ENCODE measurements at regions of chr1 and their contacts with region 1.

Region 1: GRCh38 chr1:235783148-235783776 is 83.4 kb downstream of the LYST start:
- DNase-seq: no peak
- H3K4me3 ChIP-seq: no peak overlapping the region
- H3K27ac ChIP-seq: no peak overlapping the region
- H3K4me1 ChIP-seq: no peaks in the 10 kb centered on the region
- H3K27me3 ChIP-seq: no peaks in the 10 kb centered on the region
- CTCF ChIP-seq: peak in 1 of 3 experiments; percentile 12; a peak in 1 of 4 replicates
- EP300 ChIP-seq: no peak
- POLR2A ChIP-seq: no peak
- RAD21 ChIP-seq: peak in 1 of 2 experiments; percentile 65; a peak in 3 of 4 replicates

Region 2: DNA sequence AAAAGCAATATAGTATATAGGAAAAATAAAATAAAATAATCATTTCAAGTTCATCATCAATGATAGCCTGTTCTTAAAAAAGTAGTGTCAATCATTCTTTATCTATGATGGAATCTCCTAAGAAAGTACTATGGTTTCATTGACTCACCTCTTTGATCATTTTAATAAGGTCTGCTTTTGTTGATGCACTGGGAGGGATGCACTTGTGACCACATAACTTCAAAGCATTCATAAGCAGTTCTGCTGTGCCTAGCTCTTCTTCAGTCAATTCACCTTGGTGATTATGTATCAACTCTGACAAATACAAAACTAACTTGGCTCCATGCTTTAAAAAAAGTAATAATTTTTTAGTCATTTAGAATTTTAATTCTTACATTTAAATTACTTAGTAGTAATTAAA is 48.9 kb before region 1 on chr1:
- CTCF ChIA-PET with region 1: interaction called, 17 read pairs
- POLR2A ChIA-PET with region 1: no interaction called
- DNase-seq: no peak
- H3K4me3 ChIP-seq: no peak overlapping the region
- H3K27ac ChIP-seq: no peak overlapping the region
- H3K4me1 ChIP-seq: no peaks in the 10 kb centered on the region
- H3K27me3 ChIP-seq: no peaks in the 10 kb centered on the region
- CTCF ChIP-seq: no peak
- EP300 ChIP-seq: no peak
- POLR2A ChIP-seq: no peak
- RAD21 ChIP-seq: no peak

Region 3: GRCh38 chr1:235767795-235768194 is 15.5 kb before region 1 on chr1:
- CTCF ChIA-PET with region 1: interaction called, 17 read pairs
- POLR2A ChIA-PET with region 1: no interaction called
- DNase-seq: no peak
- H3K4me3 ChIP-seq: no peak overlapping the region
- H3K27ac ChIP-seq: no peak overlapping the region
- H3K4me1 ChIP-seq: no peaks in the 10 kb centered on the region
- H3K27me3 ChIP-seq: no peaks in the 10 kb centered on the region; a peak in 1 of 7 replicates
- CTCF ChIP-seq: no peak
- EP300 ChIP-seq: no peak
- POLR2A ChIP-seq: no peak
- RAD21 ChIP-seq: no peak

Region 4: DNA sequence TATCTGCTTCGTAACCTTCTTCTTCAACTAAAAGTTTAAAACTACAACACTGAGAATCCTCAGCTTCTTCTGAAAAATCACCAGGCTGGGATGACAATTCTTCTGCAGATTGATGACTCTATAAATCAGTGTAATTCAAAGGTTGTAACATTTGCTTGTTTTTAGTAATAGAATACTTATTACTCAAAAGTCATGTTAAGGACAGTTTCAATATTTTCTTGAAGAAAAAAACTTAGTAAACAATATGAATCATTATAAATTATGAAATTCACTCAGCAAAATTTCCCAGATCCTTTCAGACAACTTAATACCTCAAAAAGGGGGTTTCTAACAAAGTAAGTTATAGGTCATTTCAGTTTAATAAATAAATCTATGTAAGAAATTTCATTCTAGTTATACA is 19.7 kb after region 1 on chr1:
- CTCF ChIA-PET with region 1: no interaction called
- POLR2A ChIA-PET with region 1: no interaction called
- DNase-seq: no peak
- H3K4me3 ChIP-seq: no peak overlapping the region
- H3K27ac ChIP-seq: no peak overlapping the region
- H3K4me1 ChIP-seq: no peaks in the 10 kb centered on the region
- H3K27me3 ChIP-seq: no peaks in the 10 kb centered on the region
- CTCF ChIP-seq: no peak
- EP300 ChIP-seq: no peak
- POLR2A ChIP-seq: no peak
- RAD21 ChIP-seq: no peak